ENCODE measurements at regions of chr2 and their contacts with region 1.

Region 1: GRCh38 chr2:179218848-179219594 is 45.6 kb downstream of the SESTD1 start:
- DNase-seq: peak; percentile 87
- ATAC-seq: peak; percentile 93
- H3K4me3 ChIP-seq: no peak overlapping the region
- H3K27ac ChIP-seq: no peak overlapping the region
- H3K4me1 ChIP-seq: no peaks in the 10 kb centered on the region
- H3K27me3 ChIP-seq: no peaks in the 10 kb centered on the region
- CTCF ChIP-seq: peak; percentile 88
- POLR2A ChIP-seq: no peak
- RAD21 ChIP-seq: peak; percentile 87

Region 2: GRCh38 chr2:179049546-179050311 is 169.3 kb before region 1 on chr2 and contains the start of gene CCDC141:
- CTCF ChIA-PET with region 1: no interaction called
- POLR2A ChIA-PET with region 1: no interaction called
- dilution Hi-C with region 1: no loop called
- in situ Hi-C with region 1: no loop called
- intact Hi-C with region 1: no loop called
- DNase-seq: no peak
- ATAC-seq: no peak
- H3K4me3 ChIP-seq: no peak within 1 kb of the TSS
- H3K27ac ChIP-seq: no peak within 1 kb of the TSS
- H3K4me1 ChIP-seq: no peaks in the 10 kb centered on the region
- H3K27me3 ChIP-seq: no peaks in the 10 kb centered on the region
- CTCF ChIP-seq: no peak
- POLR2A ChIP-seq: no peak
- RAD21 ChIP-seq: no peak
- total RNA-seq, gene CCDC141: under 0.01 TPM in 1 of 2 replicates, not detected in the other

Region 3: DNA sequence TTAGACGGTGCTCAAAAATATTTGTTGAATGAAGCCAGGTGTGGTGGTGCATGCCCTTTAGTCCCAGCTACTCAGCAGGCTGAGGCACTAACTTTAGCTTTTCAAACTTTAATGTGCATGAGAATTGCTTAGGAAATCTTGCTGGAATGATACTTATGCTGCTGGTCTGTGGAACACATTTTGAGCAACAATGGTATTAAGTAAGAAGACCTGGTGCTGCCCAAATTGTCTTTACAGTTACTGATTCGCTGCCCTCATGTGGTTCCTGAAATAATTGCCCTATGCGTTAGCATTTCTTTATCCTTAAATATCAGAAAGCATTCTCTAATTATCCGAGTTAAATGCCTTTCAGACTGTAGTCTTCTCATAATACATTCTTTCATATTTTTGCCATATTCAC is 121.6 kb after region 1 on chr2:
- CTCF ChIA-PET with region 1: no interaction called
- POLR2A ChIA-PET with region 1: no interaction called
- dilution Hi-C with region 1: no loop called
- in situ Hi-C with region 1: no loop called
- intact Hi-C with region 1: loop called (anchors 1 kb)
- DNase-seq: peak; percentile 28
- ATAC-seq: no peak
- H3K4me3 ChIP-seq: no peak overlapping the region
- H3K27ac ChIP-seq: no peak overlapping the region
- H3K4me1 ChIP-seq: peaks cover 4% of the 10 kb centered on the region
- H3K27me3 ChIP-seq: no peaks in the 10 kb centered on the region; the same call in 1 of the 2 replicates
- CTCF ChIP-seq: peak; percentile 41
- POLR2A ChIP-seq: no peak
- RAD21 ChIP-seq: peak; percentile 28

Region 4: DNA sequence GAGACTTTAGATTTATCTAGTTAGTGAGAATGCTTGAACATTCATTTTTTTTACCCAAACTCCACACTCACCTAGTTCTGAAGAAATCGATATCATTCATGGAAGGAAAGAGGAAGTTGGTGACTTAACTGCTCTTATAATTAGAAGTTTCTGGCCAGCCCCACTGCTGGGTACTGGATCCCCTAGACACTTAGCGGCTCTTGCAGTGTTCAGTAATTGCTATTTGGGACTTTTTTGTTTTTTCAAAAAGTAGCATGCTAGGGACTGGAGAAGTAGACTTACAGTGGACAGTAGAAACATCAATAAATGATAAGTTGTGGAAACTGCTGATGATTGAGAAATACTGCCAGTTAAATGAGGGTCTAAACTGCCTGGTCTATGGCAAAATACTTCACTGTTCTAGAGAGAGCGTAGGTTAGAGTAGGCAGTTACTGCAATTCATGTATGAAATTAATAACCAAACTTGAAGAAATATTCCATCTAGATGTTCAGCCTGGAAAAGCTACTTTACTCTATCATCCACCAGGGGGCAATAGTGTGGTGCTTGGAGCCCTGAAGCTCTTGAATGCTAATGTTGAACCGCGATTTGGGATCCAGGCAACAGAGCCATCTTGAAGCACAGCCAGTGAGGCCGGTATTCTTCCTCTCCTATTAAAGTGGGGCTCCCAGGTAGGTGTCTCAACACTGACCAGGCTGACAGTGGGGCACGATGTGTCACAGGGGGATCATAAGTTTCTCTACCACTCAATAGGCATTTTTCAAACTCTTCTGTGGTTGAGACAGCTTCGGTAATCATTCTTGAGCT is 191.7 kb after region 1 on chr2:
- CTCF ChIA-PET with region 1: interaction called, 3 read pairs
- POLR2A ChIA-PET with region 1: no interaction called
- dilution Hi-C with region 1: no loop called
- in situ Hi-C with region 1: no loop called
- intact Hi-C with region 1: loop called (anchors 1 kb)
- DNase-seq: peak; percentile 65
- ATAC-seq: peak; percentile 88
- H3K4me3 ChIP-seq: no peak overlapping the region
- H3K27ac ChIP-seq: no peak overlapping the region
- H3K4me1 ChIP-seq: 0 out of 2 replicates have a peak, but pooled peaks cover 2% of the 10 kb centered on the region
- H3K27me3 ChIP-seq: no peaks in the 10 kb centered on the region; the same call in 1 of the 2 replicates
- CTCF ChIP-seq: peak; percentile 67
- POLR2A ChIP-seq: no peak
- RAD21 ChIP-seq: peak; percentile 71

Region 5: GRCh38 chr2:179440642-179441251 is 221.7 kb after region 1 on chr2:
- CTCF ChIA-PET with region 1: interaction called, 3 read pairs
- POLR2A ChIA-PET with region 1: no interaction called
- dilution Hi-C with region 1: no loop called
- in situ Hi-C with region 1: no loop called
- intact Hi-C with region 1: loop called (anchors 1 kb)
- DNase-seq: peak; percentile 26
- ATAC-seq: 0 out of 2 replicates have a peak, but pooled peaks have one; percentile 56
- H3K4me3 ChIP-seq: no peak overlapping the region
- H3K27ac ChIP-seq: no peak overlapping the region
- H3K4me1 ChIP-seq: no peaks in the 10 kb centered on the region; the same call in 1 of the 2 replicates
- H3K27me3 ChIP-seq: no peaks in the 10 kb centered on the region
- CTCF ChIP-seq: peak; percentile 46
- POLR2A ChIP-seq: no peak
- RAD21 ChIP-seq: peak; percentile 34; the same call in 1 of the 2 replicates

Measured in IMR-90 (cell line).